ENCODE measurements at regions of chr2 and their contacts with region 1.

Region 1: GRCh38 chr2:68909793-68910674 is 38.8 kb upstream of the BMP10 start:
- DNase-seq: peak; percentile 79
- H3K4me3 Mint-ChIP-seq: no peak overlapping the region
- H3K27ac Mint-ChIP-seq: peak overlapping the region; percentile 53
- H3K4me1 Mint-ChIP-seq: peaks cover 40% of the 10 kb centered on the region
- H3K27me3 Mint-ChIP-seq: no peaks in the 10 kb centered on the region

Region 2: DNA sequence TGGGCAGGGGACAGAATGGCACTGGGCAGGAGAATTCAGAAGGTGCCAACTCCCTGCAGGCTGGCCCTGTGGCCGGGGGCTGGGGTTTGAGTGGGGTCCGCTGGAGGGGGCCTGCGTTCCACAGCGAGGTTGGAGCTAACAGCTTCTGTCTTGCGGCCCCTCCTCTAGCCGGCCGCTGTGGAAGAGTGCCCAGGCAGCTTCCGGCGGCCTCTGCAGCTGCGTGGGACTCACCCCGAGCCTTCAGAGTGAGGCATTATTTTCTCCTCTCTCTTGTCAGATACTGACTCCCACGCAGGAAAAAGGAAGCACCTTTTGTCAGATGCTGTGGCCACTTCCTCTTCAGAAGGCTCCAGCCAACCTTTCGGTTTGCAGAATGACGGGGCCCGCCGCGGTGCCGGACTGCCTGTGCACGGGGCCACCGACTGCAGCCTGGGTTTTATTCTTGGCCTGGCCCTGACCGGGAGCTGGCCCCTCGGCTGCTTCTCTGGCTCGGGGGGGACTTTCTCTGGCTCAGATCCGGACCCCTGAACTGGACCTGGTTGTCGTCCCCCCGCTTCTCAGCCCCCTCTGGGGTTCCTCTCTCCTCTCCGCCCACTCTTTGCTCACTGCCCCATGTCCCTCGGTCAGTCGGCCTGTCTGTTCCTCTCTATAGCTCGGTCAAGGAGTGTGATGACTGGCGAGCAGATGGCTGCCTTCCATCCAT is 135.3 kb before region 1 on chr2:
- CTCF ChIA-PET with region 1: interaction called, 15 read pairs
- DNase-seq: peak; percentile 66
- H3K4me3 Mint-ChIP-seq: peak overlapping the region; percentile 72
- H3K27ac Mint-ChIP-seq: peak overlapping the region; percentile 91
- H3K4me1 Mint-ChIP-seq: peaks cover 89% of the 10 kb centered on the region
- H3K27me3 Mint-ChIP-seq: no peaks in the 10 kb centered on the region

Region 3: DNA sequence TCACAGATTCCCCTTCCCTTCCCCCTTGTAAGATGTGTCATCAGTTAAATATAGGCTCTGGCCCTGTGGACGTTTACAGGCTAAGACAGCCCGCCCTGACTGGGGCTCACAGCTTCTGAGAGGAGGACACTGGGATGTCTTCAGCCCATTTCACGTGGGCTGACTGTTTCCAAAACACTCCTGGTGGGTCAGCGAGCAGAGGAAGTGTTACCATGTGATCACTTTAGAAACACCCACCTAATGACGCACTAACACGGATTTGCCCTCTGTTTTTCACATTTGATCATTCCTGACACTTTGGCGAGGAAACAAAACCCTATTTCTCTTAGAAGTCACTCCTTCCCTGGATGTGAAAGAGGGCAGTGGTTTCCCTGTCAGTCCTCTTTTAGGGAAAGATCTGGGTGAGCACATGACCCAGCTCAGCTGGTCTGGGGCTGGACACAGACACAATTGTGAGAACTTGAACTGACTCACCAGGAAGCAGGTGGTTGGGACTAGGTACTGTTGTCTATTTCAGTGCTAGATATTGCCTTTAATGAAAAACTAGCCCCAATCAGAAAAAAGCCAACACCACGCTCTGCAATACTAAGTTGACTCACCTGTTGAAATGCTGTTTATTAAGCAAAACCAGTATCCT is 77.7 kb before region 1 on chr2:
- CTCF ChIA-PET with region 1: interaction called, 11 read pairs
- DNase-seq: peak; percentile 42
- H3K4me3 Mint-ChIP-seq: peak overlapping the region; percentile 8
- H3K27ac Mint-ChIP-seq: peak overlapping the region; percentile 85
- H3K4me1 Mint-ChIP-seq: peaks cover 84% of the 10 kb centered on the region
- H3K27me3 Mint-ChIP-seq: no peaks in the 10 kb centered on the region

Region 4: GRCh38 chr2:68839260-68839833 is 70.7 kb before region 1 on chr2:
- CTCF ChIA-PET with region 1: interaction called, 11 read pairs
- DNase-seq: peak; percentile 46
- H3K4me3 Mint-ChIP-seq: no peak overlapping the region
- H3K27ac Mint-ChIP-seq: no peak overlapping the region
- H3K4me1 Mint-ChIP-seq: peaks cover 34% of the 10 kb centered on the region
- H3K27me3 Mint-ChIP-seq: peaks cover 3% of the 10 kb centered on the region

Measured in activated naive CD4-positive, alpha-beta T cell treated with anti-CD3 and anti-CD28 coated beads, Interleukin-2, amount 10 ng/mL, durations not matched to agents 7 days and 5 days (primary cell).